ENCODE measurements at regions of chr4 and their contacts with region 1.

Region 1: GRCh38 chr4:101086801-101087586 is 260.3 kb downstream of the PPP3CA start:
- DNase-seq: peak; percentile 23
- ATAC-seq: peak; percentile 18
- H3K4me3 ChIP-seq: no peak overlapping the region
- H3K4me3 Mint-ChIP-seq: no peak overlapping the region
- H3K27ac ChIP-seq: peak overlapping the region in 1 of 2 donors; percentile 33
- H3K27ac Mint-ChIP-seq: peak overlapping the region; percentile 54
- H3K4me1 ChIP-seq: peaks cover 24 to 29% of the 10 kb centered on the region in 2 donors
- H3K4me1 Mint-ChIP-seq: peaks cover 56% of the 10 kb centered on the region
- H3K27me3 ChIP-seq: no peaks in the 10 kb centered on the region
- H3K27me3 Mint-ChIP-seq: no peaks in the 10 kb centered on the region
- CTCF ChIP-seq: peak; percentile 10

Region 2: DNA sequence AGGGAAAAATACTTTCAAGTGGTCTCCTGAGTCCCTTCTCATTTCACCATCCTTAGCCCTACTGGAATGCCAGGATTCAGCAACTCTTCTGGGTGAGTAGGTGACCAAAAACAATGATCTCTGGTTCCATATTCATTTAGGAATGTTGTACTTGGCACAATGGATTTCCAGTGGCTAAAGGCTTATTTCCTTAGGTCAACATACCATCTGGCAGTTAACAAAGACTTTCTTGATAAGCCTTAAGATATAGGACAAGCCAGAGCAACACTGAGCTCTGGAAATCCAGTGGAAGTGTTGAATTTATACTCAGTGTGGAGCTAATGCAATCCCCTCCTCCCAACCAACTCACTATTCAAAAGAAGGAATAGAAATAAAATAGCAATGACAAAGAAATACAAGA is 429.8 kb before region 1 on chr4:
- CTCF ChIA-PET with region 1: no interaction called
- POLR2A ChIA-PET with region 1: no interaction called
- intact Hi-C with region 1: no loop called
- DNase-seq: no peak
- ATAC-seq: no peak
- H3K4me3 ChIP-seq: no peak overlapping the region
- H3K4me3 Mint-ChIP-seq: no peak overlapping the region
- H3K27ac ChIP-seq: no peak overlapping the region
- H3K27ac Mint-ChIP-seq: no peak overlapping the region
- H3K4me1 ChIP-seq: no peaks in the 10 kb centered on the region
- H3K4me1 Mint-ChIP-seq: no peaks in the 10 kb centered on the region
- H3K27me3 ChIP-seq: peaks cover 0 to 3% (median 0%) of the 10 kb centered on the region in 4 experiments
- H3K27me3 Mint-ChIP-seq: peaks cover 14% of the 10 kb centered on the region
- CTCF ChIP-seq: no peak

Region 3: GRCh38 chr4:101103381-101104142 is 16.6 kb after region 1 on chr4:
- CTCF ChIA-PET with region 1: interaction called, 4 read pairs
- POLR2A ChIA-PET with region 1: interaction called, 3 read pairs
- intact Hi-C with region 1: loop called (anchors 2 kb)
- DNase-seq: peak; percentile 57
- ATAC-seq: peak; percentile 86
- H3K4me3 ChIP-seq: peak overlapping the region in 1 of 5 experiments; percentile 35
- H3K4me3 Mint-ChIP-seq: peak overlapping the region; percentile 54
- H3K27ac ChIP-seq: peak overlapping the region; percentile 34 to 74
- H3K27ac Mint-ChIP-seq: peak overlapping the region; percentile 91
- H3K4me1 ChIP-seq: peaks cover 34 to 37% of the 10 kb centered on the region in 2 donors
- H3K4me1 Mint-ChIP-seq: peaks cover 51% of the 10 kb centered on the region
- H3K27me3 ChIP-seq: no peaks in the 10 kb centered on the region
- H3K27me3 Mint-ChIP-seq: no peaks in the 10 kb centered on the region
- CTCF ChIP-seq: no peak

Region 4: DNA sequence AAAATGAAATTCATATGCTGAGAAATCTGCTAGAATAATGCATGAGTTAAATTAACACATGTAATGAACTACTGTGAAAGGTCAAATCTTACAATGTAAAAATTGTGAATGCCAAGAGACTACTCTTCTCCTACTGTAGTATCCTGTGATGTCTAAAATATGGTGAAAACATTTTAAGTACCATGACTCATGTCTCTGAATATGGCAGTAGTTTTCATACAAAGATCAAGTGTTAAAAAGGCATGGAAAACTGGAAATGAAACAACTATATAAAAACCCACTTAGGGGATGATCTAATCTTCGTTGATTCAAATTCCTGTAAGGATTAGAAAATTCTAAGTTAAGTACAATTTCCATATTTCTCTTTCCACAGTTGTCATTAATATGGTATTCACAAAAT is 39.1 kb after region 1 on chr4:
- CTCF ChIA-PET with region 1: interaction called, 3 read pairs
- POLR2A ChIA-PET with region 1: no interaction called
- intact Hi-C with region 1: loop called (anchors 2 kb)
- DNase-seq: no peak
- ATAC-seq: no peak
- H3K4me3 ChIP-seq: no peak overlapping the region
- H3K4me3 Mint-ChIP-seq: peak overlapping the region; percentile 2
- H3K27ac ChIP-seq: no peak overlapping the region
- H3K27ac Mint-ChIP-seq: no peak overlapping the region
- H3K4me1 ChIP-seq: peaks cover 51 to 66% of the 10 kb centered on the region in 2 donors
- H3K4me1 Mint-ChIP-seq: peaks cover 79% of the 10 kb centered on the region
- H3K27me3 ChIP-seq: no peaks in the 10 kb centered on the region
- H3K27me3 Mint-ChIP-seq: no peaks in the 10 kb centered on the region
- CTCF ChIP-seq: no peak

Region 5: GRCh38 chr4:101135371-101136010 is 48.5 kb after region 1 on chr4:
- CTCF ChIA-PET with region 1: no interaction called
- POLR2A ChIA-PET with region 1: no interaction called
- intact Hi-C with region 1: loop called (anchors 5 kb)
- DNase-seq: no peak
- ATAC-seq: peak; percentile 24
- H3K4me3 ChIP-seq: peak overlapping the region in 3 of 5 experiments; percentile 10 to 45 (median 15)
- H3K4me3 Mint-ChIP-seq: peak overlapping the region; percentile 69
- H3K27ac ChIP-seq: peak overlapping the region; percentile 34 to 44
- H3K27ac Mint-ChIP-seq: peak overlapping the region; percentile 28
- H3K4me1 ChIP-seq: peaks cover 28 to 30% of the 10 kb centered on the region in 2 donors
- H3K4me1 Mint-ChIP-seq: peaks cover 79% of the 10 kb centered on the region
- H3K27me3 ChIP-seq: no peaks in the 10 kb centered on the region
- H3K27me3 Mint-ChIP-seq: no peaks in the 10 kb centered on the region
- CTCF ChIP-seq: no peak